ENCODE measurements at regions of chr14 and their contacts with region 1.

Region 1: GRCh38 chr14:22556990-22557623 is 31.9 kb downstream of the DAD1 start:
- DNase-seq: peak; percentile 76 to 95 (median 86)
- ATAC-seq: peak; percentile 84 to 89 (median 87)
- H3K4me3 ChIP-seq: peak overlapping the region in 10 of 12 donors; percentile 29 to 52 (median 42)
- H3K27ac ChIP-seq: peak overlapping the region in 11 of 12 donors; percentile 3 to 83 (median 55)
- H3K4me1 ChIP-seq: peaks cover 0 to 70% (median 30%) of the 10 kb centered on the region in 12 donors
- H3K27me3 ChIP-seq: no peaks in the 10 kb centered on the region
- CTCF ChIP-seq: peak in 10 of 12 donors; percentile 93 to 100 (median 98)
- POLR2A ChIP-seq: peak in 1 of 2 donors; percentile 22

Region 2: GRCh38 chr14:22386924-22387775 is 170.0 kb before region 1 on chr14:
- intact Hi-C with region 1: loop called (anchors 2 to 10 kb)
- DNase-seq: peak in 4 of 5 donors; percentile 56 to 66 (median 60)
- ATAC-seq: peak in 3 of 4 donors; percentile 50 to 66 (median 60)
- H3K4me3 ChIP-seq: no peak overlapping the region
- H3K27ac ChIP-seq: no peak overlapping the region
- H3K4me1 ChIP-seq: peaks cover 0 to 8% (median 0%) of the 10 kb centered on the region in 12 donors
- H3K27me3 ChIP-seq: peaks cover 0 to 29% (median 0%) of the 10 kb centered on the region in 9 donors
- CTCF ChIP-seq: peak; percentile 67 to 90 (median 84)
- POLR2A ChIP-seq: no peak

Region 3: DNA sequence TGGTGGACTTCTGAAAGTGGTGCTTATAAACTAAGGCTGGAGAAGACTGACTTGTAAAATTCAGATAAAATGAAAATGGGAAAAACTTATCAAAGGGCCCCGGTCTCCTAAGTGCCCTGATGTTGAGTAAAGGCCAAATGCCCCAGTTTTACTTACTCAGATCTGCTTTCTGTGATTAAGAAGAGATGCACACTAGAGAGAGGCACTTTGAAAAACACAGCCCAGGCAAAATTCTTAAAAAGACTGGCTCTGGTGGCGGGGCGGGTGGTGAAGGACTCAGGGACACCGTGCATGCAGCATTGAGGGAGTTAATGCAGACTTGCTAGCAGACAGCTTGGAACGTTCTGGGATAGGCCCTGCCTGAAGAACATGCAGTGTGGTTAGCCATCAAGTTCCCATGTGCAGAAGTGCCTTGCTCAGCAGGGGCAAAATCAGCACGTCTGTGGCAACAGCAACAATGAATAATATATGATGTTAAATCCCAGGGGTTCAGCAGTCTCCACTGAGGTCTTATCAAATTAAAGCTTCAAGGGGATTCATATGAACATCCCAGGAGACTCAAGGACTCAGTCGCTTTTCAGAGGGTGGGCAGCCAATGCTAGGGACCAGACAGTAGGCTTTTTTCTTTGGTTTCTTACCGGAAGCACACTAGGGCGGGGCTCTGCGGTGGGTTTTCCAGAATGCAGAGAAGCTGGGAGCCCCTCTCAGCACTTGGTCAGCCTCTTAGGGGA is 73.1 kb before region 1 on chr14:
- intact Hi-C with region 1: loop called in 2 of 10 experiments (anchors 5 kb)
- DNase-seq: no peak
- ATAC-seq: peak in 1 of 4 donors; percentile 17
- H3K4me3 ChIP-seq: peak overlapping the region in 1 of 12 donors; percentile 4
- H3K27ac ChIP-seq: peak overlapping the region in 10 of 12 donors; percentile 49 to 72 (median 56)
- H3K4me1 ChIP-seq: peaks cover 11 to 87% (median 61%) of the 10 kb centered on the region in 12 donors
- H3K27me3 ChIP-seq: no peaks in the 10 kb centered on the region
- CTCF ChIP-seq: no peak
- POLR2A ChIP-seq: no peak

Region 4: DNA sequence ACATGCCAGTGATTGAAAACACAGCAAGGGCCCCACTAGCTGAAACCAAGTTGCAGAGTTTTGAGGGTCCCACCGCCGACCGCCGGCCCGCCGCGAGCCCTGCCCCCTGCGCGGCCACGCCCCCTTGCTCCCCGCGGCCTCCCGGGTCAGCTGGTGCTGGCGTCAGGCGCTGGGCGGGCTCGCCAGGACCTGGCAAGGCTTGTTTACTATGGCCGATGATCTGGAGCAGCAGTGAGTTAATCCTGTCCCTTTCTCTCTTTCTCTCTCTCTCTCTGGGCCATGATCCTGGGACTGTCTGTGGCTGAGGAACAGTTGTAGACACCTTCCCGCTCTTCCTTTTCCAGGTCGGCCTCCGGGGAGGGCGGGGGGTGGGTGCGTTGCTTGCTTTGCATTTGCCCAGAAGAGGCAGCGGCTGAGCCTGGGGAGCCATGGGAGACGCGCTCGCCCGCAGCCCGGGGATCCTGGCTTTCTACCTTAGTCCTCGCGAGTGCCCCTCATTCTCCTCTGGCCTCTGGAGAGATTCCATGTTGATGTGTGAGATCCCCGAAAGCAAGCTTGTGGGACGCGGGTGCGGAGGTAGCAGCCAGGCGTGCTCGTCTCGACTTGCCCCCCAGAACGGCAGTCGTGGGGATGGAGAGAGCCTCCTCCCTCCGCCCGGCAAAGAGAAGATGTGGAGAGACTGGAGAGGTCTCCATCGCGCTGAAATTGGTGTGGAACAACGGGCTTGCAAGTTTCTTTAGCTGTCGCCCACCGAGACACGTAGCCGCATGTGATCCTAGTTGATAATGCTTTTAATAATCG is 41.2 kb after region 1 on chr14 and contains the start of gene ABHD4:
- intact Hi-C with region 1: no loop called
- DNase-seq: peak; percentile 84 to 91 (median 86)
- ATAC-seq: peak; percentile 93 to 99 (median 98)
- H3K4me3 ChIP-seq: peak within 1 kb of the TSS; percentile 43 to 91 (median 82)
- H3K27ac ChIP-seq: peak within 1 kb of the TSS in 11 of 12 donors; percentile 59 to 91 (median 83)
- H3K4me1 ChIP-seq: peaks cover 3 to 27% (median 17%) of the 10 kb centered on the region in 12 donors
- H3K27me3 ChIP-seq: peaks cover 0 to 5% (median 0%) of the 10 kb centered on the region in 9 donors
- CTCF ChIP-seq: no peak
- POLR2A ChIP-seq: peak in 1 of 2 donors; percentile 78
- total RNA-seq, gene ABHD4: 16.8 to 35.5 (median 25.9) TPM

Region 5: DNA sequence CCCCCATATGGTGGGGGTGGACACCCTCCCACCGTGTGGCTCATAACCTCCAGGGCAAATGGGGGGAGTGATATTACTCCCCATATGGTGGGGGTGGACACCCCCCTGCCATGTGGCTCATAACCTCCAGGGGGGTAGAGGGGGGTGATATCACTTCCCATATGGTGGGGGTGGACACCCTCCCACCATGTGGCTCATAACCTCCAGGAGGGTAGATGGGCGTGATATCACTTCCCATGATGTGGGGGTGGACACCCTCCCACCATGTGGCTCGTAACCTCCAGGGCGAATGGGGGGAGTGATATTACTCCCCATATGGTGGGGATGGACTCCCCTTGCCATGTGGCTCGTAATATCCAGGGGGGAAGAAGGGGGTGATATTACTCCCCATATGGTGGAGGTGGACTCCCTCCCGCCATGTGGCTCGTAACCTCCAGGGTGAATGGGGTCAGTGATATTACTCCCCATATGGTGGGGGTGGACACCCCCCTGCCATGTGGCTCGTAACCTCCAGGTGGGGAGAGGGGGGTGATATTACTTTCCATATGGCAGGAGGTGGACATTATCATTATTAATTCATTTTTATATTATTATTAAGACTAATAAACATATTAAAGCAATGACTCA is 158.2 kb after region 1 on chr14:
- intact Hi-C with region 1: loop called in 1 of 10 experiments (anchors 10 kb)
- DNase-seq: no peak
- ATAC-seq: no peak
- H3K4me3 ChIP-seq: no peak overlapping the region
- H3K27ac ChIP-seq: no peak overlapping the region
- H3K4me1 ChIP-seq: peaks cover 0 to 9% (median 0%) of the 10 kb centered on the region in 12 donors
- H3K27me3 ChIP-seq: peaks cover 0 to 27% (median 6%) of the 10 kb centered on the region in 9 donors
- CTCF ChIP-seq: no peak
- POLR2A ChIP-seq: no peak

Region 6: DNA sequence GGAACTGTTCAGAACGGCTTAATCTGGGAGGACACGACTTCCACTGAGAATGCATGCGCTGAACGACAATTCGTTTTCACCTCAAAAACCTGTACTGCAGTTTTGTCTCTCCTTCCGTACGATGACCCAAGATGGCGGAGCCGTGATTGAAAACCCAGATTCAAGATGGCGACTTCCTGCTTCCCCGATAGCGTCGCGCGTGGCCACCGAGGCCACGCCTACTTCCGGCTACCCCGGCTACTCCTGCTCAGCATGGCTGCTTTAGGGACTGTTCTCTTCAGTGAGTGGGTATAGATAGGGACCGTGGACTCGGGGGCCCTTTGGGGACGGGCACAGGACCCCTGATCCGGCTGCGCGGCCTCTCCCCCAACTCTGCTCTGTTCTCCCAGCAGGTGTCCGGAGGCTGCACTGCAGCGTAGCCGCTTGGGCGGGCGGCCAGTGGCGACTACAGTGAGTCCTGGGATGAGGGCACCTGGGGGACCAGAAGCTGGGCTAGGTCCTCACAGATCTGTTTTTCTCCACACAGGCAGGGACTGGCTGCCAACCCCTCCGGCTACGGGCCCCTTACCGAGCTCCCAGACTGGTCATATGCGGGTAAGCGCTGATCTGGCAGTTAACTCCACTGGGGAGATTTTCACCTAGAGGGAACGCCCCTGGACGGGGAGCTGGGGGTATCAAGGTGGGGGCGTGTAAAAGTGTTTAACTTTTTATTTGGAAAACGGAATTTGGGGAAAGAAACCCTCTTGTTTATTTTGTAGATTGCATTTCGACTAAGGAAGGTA is 272.7 kb after region 1 on chr14 and contains the start of gene MRPL52:
- intact Hi-C with region 1: loop called in 2 of 10 experiments (anchors 10 kb)
- DNase-seq: peak; percentile 91 to 94 (median 92)
- ATAC-seq: peak; percentile 88 to 98 (median 98)
- H3K4me3 ChIP-seq: peak within 1 kb of the TSS; percentile 66 to 93 (median 78)
- H3K27ac ChIP-seq: peak within 1 kb of the TSS; percentile 53 to 87 (median 80)
- H3K4me1 ChIP-seq: peaks cover 0 to 17% (median 11%) of the 10 kb centered on the region in 12 donors
- H3K27me3 ChIP-seq: no peaks in the 10 kb centered on the region
- CTCF ChIP-seq: no peak
- POLR2A ChIP-seq: peak in 1 of 2 donors; percentile 20
- total RNA-seq, gene MRPL52: 80.4 to 185 (median 107) TPM

Region 7: GRCh38 chr14:22973217-22974032 is 416.3 kb after region 1 on chr14:
- intact Hi-C with region 1: loop called in 1 of 10 experiments (anchors 10 kb)
- DNase-seq: peak in 2 of 5 donors; percentile 37 to 43
- ATAC-seq: peak; percentile 5 to 57 (median 42)
- H3K4me3 ChIP-seq: no peak overlapping the region
- H3K27ac ChIP-seq: peak overlapping the region in 5 of 12 donors; percentile 5 to 55 (median 27)
- H3K4me1 ChIP-seq: peaks cover 3 to 30% (median 20%) of the 10 kb centered on the region in 12 donors
- H3K27me3 ChIP-seq: no peaks in the 10 kb centered on the region
- CTCF ChIP-seq: peak; percentile 53 to 80 (median 66)
- POLR2A ChIP-seq: no peak

Region 8: GRCh38 chr14:23057757-23058653 is 500.9 kb after region 1 on chr14:
- intact Hi-C with region 1: loop called in 1 of 10 experiments (anchors 10 kb)
- DNase-seq: peak; percentile 84 to 91 (median 88)
- ATAC-seq: peak; percentile 73 to 77 (median 74)
- H3K4me3 ChIP-seq: peak overlapping the region; percentile 46 to 84 (median 68)
- H3K27ac ChIP-seq: peak overlapping the region in 10 of 12 donors; percentile 39 to 77 (median 58)
- H3K4me1 ChIP-seq: peaks cover 0 to 39% (median 25%) of the 10 kb centered on the region in 12 donors
- H3K27me3 ChIP-seq: no peaks in the 10 kb centered on the region
- CTCF ChIP-seq: peak; percentile 92 to 96 (median 94)
- POLR2A ChIP-seq: no peak

Measured in heart left ventricle (tissue), 16 donors.